GM12878 (cell line): ENCODE measurements at regions of chr11 and their contacts with region 1.

Region 1: GRCh38 chr11:95715777-95716241 is 73.8 kb downstream of the FAM76B start:
- DNase-seq: peak; percentile 89
- ATAC-seq: peak; percentile 84
- H3K4me3 ChIP-seq: no peak overlapping the region
- H3K27ac ChIP-seq: no peak overlapping the region
- H3K4me1 ChIP-seq: peaks cover 26% of the 10 kb centered on the region
- H3K27me3 ChIP-seq: no peaks in the 10 kb centered on the region
- CTCF ChIP-seq: no peak
- EP300 ChIP-seq: peak; percentile 87 to 89; a peak in 3 of 4 replicates
- POLR2A ChIP-seq: no peak
- RAD21 ChIP-seq: no peak

Region 2: GRCh38 chr11:95254131-95254704 is 461.6 kb before region 1 on chr11:
- CTCF ChIA-PET with region 1: interaction called, 3 read pairs
- POLR2A ChIA-PET with region 1: interaction called, 7 read pairs
- RAD21 ChIA-PET with region 1: interaction called, 18 read pairs
- SMC1A ChIA-PET with region 1: interaction called, 17 read pairs
- in situ Hi-C with region 1: no loop called
- intact Hi-C with region 1: no loop called
- DNase-seq: peak; percentile 96
- ATAC-seq: peak; percentile 96
- H3K4me3 ChIP-seq: 0 out of 2 replicates have a peak overlapping the region, but pooled peaks have one; percentile 0
- H3K27ac ChIP-seq: peak overlapping the region; percentile 77
- H3K4me1 ChIP-seq: peaks cover 47% of the 10 kb centered on the region
- H3K27me3 ChIP-seq: no peaks in the 10 kb centered on the region
- CTCF ChIP-seq: no peak
- EP300 ChIP-seq: peak in 1 of 2 experiments; percentile 63; a peak in 2 of 4 replicates
- POLR2A ChIP-seq: peak; percentile 64
- RAD21 ChIP-seq: no peak

Region 3: GRCh38 chr11:95674657-95675358 is 41.0 kb before region 1 on chr11:
- CTCF ChIA-PET with region 1: no interaction called
- POLR2A ChIA-PET with region 1: no interaction called
- RAD21 ChIA-PET with region 1: no interaction called
- SMC1A ChIA-PET with region 1: no interaction called
- in situ Hi-C with region 1: no loop called
- intact Hi-C with region 1: no loop called
- DNase-seq: no peak
- ATAC-seq: no peak
- H3K4me3 ChIP-seq: no peak overlapping the region
- H3K27ac ChIP-seq: no peak overlapping the region
- H3K4me1 ChIP-seq: no peaks in the 10 kb centered on the region; the same call in 1 of the 2 replicates
- H3K27me3 ChIP-seq: no peaks in the 10 kb centered on the region
- CTCF ChIP-seq: no peak
- EP300 ChIP-seq: no peak
- POLR2A ChIP-seq: no peak
- RAD21 ChIP-seq: no peak

Region 4: GRCh38 chr11:95688580-95689189 is 27.1 kb before region 1 on chr11:
- CTCF ChIA-PET with region 1: interaction called, 4 read pairs
- POLR2A ChIA-PET with region 1: interaction called, 5 read pairs
- RAD21 ChIA-PET with region 1: interaction called, 5 read pairs
- SMC1A ChIA-PET with region 1: interaction called, 110 read pairs
- in situ Hi-C with region 1: no loop called
- intact Hi-C with region 1: no loop called
- DNase-seq: no peak
- ATAC-seq: peak; percentile 57
- H3K4me3 ChIP-seq: no peak overlapping the region
- H3K27ac ChIP-seq: no peak overlapping the region
- H3K4me1 ChIP-seq: no peaks in the 10 kb centered on the region
- H3K27me3 ChIP-seq: no peaks in the 10 kb centered on the region; a peak in 1 of 4 replicates
- CTCF ChIP-seq: no peak
- EP300 ChIP-seq: no peak
- POLR2A ChIP-seq: no peak
- RAD21 ChIP-seq: no peak

Region 5: GRCh38 chr11:95727620-95728019 is 11.8 kb after region 1 on chr11:
- CTCF ChIA-PET with region 1: interaction called, 9 read pairs
- POLR2A ChIA-PET with region 1: interaction called, 6 read pairs
- RAD21 ChIA-PET with region 1: interaction called, 4 read pairs
- SMC1A ChIA-PET with region 1: interaction called, 15 read pairs
- in situ Hi-C with region 1: no loop called
- intact Hi-C with region 1: no loop called
- DNase-seq: no peak
- ATAC-seq: no peak
- H3K4me3 ChIP-seq: no peak overlapping the region
- H3K27ac ChIP-seq: no peak overlapping the region
- H3K4me1 ChIP-seq: no peaks in the 10 kb centered on the region
- H3K27me3 ChIP-seq: no peaks in the 10 kb centered on the region
- CTCF ChIP-seq: no peak
- EP300 ChIP-seq: no peak
- POLR2A ChIP-seq: no peak
- RAD21 ChIP-seq: no peak

Region 6: DNA sequence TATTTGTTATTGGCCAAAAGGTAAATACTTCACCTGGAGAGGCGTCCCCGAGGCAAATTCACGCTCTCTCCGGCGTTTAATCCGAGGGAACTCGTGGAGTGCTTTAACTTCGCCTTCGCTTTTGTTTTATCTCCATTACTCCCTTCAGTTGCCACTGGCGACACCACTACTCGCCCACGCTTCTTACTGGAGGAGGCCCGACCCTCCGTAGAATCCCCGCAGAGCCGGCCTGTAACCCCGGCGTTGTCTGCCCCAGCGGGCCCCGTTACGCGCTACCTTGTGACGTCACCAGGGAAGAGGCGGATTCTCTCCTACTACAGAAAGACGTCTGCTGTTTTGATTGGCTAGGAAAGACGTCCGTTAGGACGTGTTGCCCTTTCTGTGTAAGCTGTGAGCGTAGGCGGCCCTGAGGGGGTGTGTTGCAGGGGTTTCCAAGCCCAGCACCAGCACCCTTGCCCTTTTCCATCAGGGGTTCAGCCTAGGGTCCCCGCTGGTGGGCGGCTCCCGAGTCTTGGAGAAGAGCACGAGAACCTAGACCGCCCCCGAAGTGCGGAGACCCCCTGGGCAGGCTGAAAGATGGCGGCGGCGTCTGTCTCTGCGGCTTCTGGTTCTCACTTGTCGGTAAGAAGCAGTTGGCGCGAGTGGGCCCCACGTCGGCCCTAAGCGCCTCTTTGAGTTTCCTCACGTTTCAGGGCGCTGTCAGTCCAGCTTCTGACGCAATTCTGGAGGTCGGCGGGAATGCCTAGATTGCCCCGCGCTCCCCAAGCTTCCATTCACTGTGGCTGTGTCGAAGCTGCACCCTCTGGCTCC is 74.5 kb after region 1 on chr11 and contains the start of gene CEP57:
- CTCF ChIA-PET with region 1: interaction called, 3 read pairs
- POLR2A ChIA-PET with region 1: interaction called, 11 read pairs
- RAD21 ChIA-PET with region 1: interaction called, 4 read pairs
- SMC1A ChIA-PET with region 1: interaction called, 7 read pairs
- in situ Hi-C with region 1: no loop called
- intact Hi-C with region 1: no loop called
- DNase-seq: peak; percentile 92
- ATAC-seq: peak; percentile 73
- H3K4me3 ChIP-seq: peak within 1 kb of the TSS; percentile 87
- H3K27ac ChIP-seq: peak within 1 kb of the TSS; percentile 90
- H3K4me1 ChIP-seq: 0 out of 2 replicates have a peak, but pooled peaks cover 3% of the 10 kb centered on the region
- H3K27me3 ChIP-seq: no peaks in the 10 kb centered on the region
- CTCF ChIP-seq: no peak
- EP300 ChIP-seq: 0 out of 4 replicates have a peak, but pooled peaks of 1 of the 2 experiments have one; percentile 40
- POLR2A ChIP-seq: peak; percentile 77
- RAD21 ChIP-seq: no peak
- polyA plus RNA-seq, gene CEP57: 19.4 to 25.8 TPM